ENCODE measurements at regions of chr13 and their contacts with region 1.

Region 1: GRCh38 chr13:46624353-46624752 is 71.4 kb downstream of the LRCH1 start:
- DNase-seq: no peak
- H3K4me3 ChIP-seq: no peak overlapping the region
- H3K27ac ChIP-seq: no peak overlapping the region
- H3K4me1 ChIP-seq: no peaks in the 10 kb centered on the region
- H3K27me3 ChIP-seq: no peaks in the 10 kb centered on the region
- CTCF ChIP-seq: no peak
- POLR2A ChIP-seq: no peak

Region 2: DNA sequence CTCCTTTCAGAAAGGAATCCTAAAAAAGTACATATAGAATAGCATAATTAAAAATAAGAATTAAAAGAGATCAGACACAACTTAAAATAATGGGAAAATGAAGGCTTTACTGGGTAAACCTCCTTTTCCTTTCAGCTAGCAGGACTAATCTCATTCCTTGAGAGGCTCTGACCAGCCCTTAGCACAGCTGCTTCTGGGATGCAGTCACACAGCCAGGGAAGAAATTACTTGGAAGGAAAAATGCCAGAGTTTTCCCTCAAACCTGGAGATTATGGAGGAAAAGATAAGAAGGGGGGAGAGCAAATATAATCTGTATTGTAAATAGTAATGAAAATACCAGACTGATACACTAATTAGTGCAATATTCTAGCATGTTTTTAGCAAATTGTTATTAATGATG is 20.5 kb after region 1 on chr13:
- intact Hi-C with region 1: loop called (anchors 2 kb)
- DNase-seq: no peak
- H3K4me3 ChIP-seq: no peak overlapping the region
- H3K27ac ChIP-seq: no peak overlapping the region
- H3K4me1 ChIP-seq: peaks cover 0 to under 1% of the 10 kb centered on the region in 2 donors
- H3K27me3 ChIP-seq: no peaks in the 10 kb centered on the region
- CTCF ChIP-seq: no peak
- POLR2A ChIP-seq: no peak

Region 3: DNA sequence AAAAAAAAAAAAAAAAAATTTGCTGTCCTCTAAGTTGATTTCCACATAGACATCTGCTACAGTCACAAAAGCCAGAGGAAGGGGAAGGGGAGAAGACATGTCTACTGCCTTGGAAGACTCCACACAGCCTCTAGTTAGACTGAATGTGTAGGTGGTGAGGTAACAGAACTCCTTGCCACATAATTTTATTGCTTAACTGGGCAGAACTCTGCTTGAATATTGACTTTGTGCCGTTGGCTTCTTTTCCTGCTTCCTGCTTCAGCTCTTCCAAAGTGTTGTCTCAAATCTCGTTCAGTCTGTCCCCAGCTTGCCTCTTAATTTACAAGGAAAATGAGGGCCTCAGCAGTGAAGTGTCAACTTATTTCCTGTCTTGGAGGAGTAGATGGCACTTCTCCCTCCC is 135.5 kb after region 1 on chr13:
- intact Hi-C with region 1: no loop called
- DNase-seq: no peak
- H3K4me3 ChIP-seq: no peak overlapping the region
- H3K27ac ChIP-seq: peak overlapping the region; percentile 52 to 56
- H3K4me1 ChIP-seq: no peaks in the 10 kb centered on the region
- H3K27me3 ChIP-seq: no peaks in the 10 kb centered on the region
- CTCF ChIP-seq: no peak
- POLR2A ChIP-seq: no peak

Measured in breast epithelium (tissue), 4 donors.